Naive thymus-derived CD4-positive, alpha-beta T cell (primary cell): ENCODE measurements at regions of chr5 and their contacts with region 1.

Region 1: GRCh38 chr5:35822511-35822910 is 34.2 kb upstream of the IL7R start:
- DNase-seq: peak in 7 of 9 donors; percentile 49 to 83 (median 76)
- ATAC-seq: peak; percentile 82
- H3K4me3 ChIP-seq: peak overlapping the region; percentile 7
- H3K4me3 Mint-ChIP-seq: peak overlapping the region; percentile 38 to 75 (median 70)
- H3K27ac ChIP-seq: peak overlapping the region; percentile 62
- H3K27ac Mint-ChIP-seq: peak overlapping the region; percentile 84 to 98 (median 95)
- H3K4me1 ChIP-seq: peaks cover 91 to 92% of the 10 kb centered on the region in 2 donors
- H3K4me1 Mint-ChIP-seq: peaks cover 55 to 94% (median 88%) of the 10 kb centered on the region in 7 donors
- H3K27me3 ChIP-seq: no peaks in the 10 kb centered on the region
- H3K27me3 Mint-ChIP-seq: no peaks in the 10 kb centered on the region

Region 2: GRCh38 chr5:35785601-35786085 is 36.9 kb before region 1 on chr5:
- CTCF ChIA-PET with region 1: interaction called, 50 read pairs
- POLR2A ChIA-PET with region 1: interaction called, 238 read pairs
- intact Hi-C with region 1: no loop called
- DNase-seq: peak in 1 of 9 donors; percentile 57
- ATAC-seq: peak; percentile 36
- H3K4me3 ChIP-seq: no peak overlapping the region
- H3K4me3 Mint-ChIP-seq: peak overlapping the region; percentile 16 to 68 (median 60)
- H3K27ac ChIP-seq: no peak overlapping the region
- H3K27ac Mint-ChIP-seq: peak overlapping the region; percentile 20 to 89 (median 68)
- H3K4me1 ChIP-seq: peaks cover 38 to 53% of the 10 kb centered on the region in 2 donors
- H3K4me1 Mint-ChIP-seq: peaks cover 29 to 97% (median 88%) of the 10 kb centered on the region in 7 donors
- H3K27me3 ChIP-seq: no peaks in the 10 kb centered on the region
- H3K27me3 Mint-ChIP-seq: no peaks in the 10 kb centered on the region

Region 3: GRCh38 chr5:35803191-35803651 is 19.3 kb before region 1 on chr5:
- CTCF ChIA-PET with region 1: interaction called, 4 read pairs
- POLR2A ChIA-PET with region 1: interaction called, 126 read pairs
- intact Hi-C with region 1: no loop called
- DNase-seq: peak in 3 of 9 donors; percentile 33 to 34 (median 34)
- ATAC-seq: peak; percentile 61
- H3K4me3 ChIP-seq: peak overlapping the region; percentile 0
- H3K4me3 Mint-ChIP-seq: peak overlapping the region; percentile 42 to 72 (median 64)
- H3K27ac ChIP-seq: no peak overlapping the region
- H3K27ac Mint-ChIP-seq: peak overlapping the region; percentile 44 to 89 (median 82)
- H3K4me1 ChIP-seq: peaks cover 36 to 54% of the 10 kb centered on the region in 2 donors
- H3K4me1 Mint-ChIP-seq: peaks cover 31 to 90% (median 82%) of the 10 kb centered on the region in 7 donors
- H3K27me3 ChIP-seq: no peaks in the 10 kb centered on the region
- H3K27me3 Mint-ChIP-seq: no peaks in the 10 kb centered on the region

Region 4: GRCh38 chr5:35838370-35839042 is 16.0 kb after region 1 on chr5:
- CTCF ChIA-PET with region 1: interaction called, 4 read pairs
- POLR2A ChIA-PET with region 1: interaction called, 26 read pairs
- intact Hi-C with region 1: loop called (anchors 1 kb)
- DNase-seq: no peak
- ATAC-seq: no peak
- H3K4me3 ChIP-seq: no peak overlapping the region
- H3K4me3 Mint-ChIP-seq: peak overlapping the region; percentile 4 to 68 (median 31)
- H3K27ac ChIP-seq: no peak overlapping the region
- H3K27ac Mint-ChIP-seq: peak overlapping the region in 8 of 9 donors; percentile 15 to 97 (median 66)
- H3K4me1 ChIP-seq: peaks cover 36 to 39% of the 10 kb centered on the region in 2 donors
- H3K4me1 Mint-ChIP-seq: peaks cover 34 to 85% (median 78%) of the 10 kb centered on the region in 7 donors
- H3K27me3 ChIP-seq: no peaks in the 10 kb centered on the region
- H3K27me3 Mint-ChIP-seq: no peaks in the 10 kb centered on the region

Region 5: GRCh38 chr5:35857606-35858205 is 35.2 kb after region 1 on chr5:
- CTCF ChIA-PET with region 1: interaction called, 18 read pairs
- POLR2A ChIA-PET with region 1: interaction called, 1,069 read pairs
- intact Hi-C with region 1: loop called (anchors 1 kb)
- DNase-seq: peak in 1 of 9 donors; percentile 41
- ATAC-seq: no peak
- H3K4me3 ChIP-seq: peak overlapping the region; percentile 80
- H3K4me3 Mint-ChIP-seq: peak overlapping the region; percentile 82 to 100 (median 94)
- H3K27ac ChIP-seq: peak overlapping the region; percentile 98
- H3K27ac Mint-ChIP-seq: peak overlapping the region; percentile 96 to 100 (median 99)
- H3K4me1 ChIP-seq: peaks cover 40 to 50% of the 10 kb centered on the region in 2 donors
- H3K4me1 Mint-ChIP-seq: peaks cover 25 to 73% (median 63%) of the 10 kb centered on the region in 7 donors
- H3K27me3 ChIP-seq: no peaks in the 10 kb centered on the region
- H3K27me3 Mint-ChIP-seq: no peaks in the 10 kb centered on the region

Region 6: GRCh38 chr5:35876921-35877320 is 54.4 kb after region 1 on chr5:
- CTCF ChIA-PET with region 1: interaction called, 4 read pairs
- POLR2A ChIA-PET with region 1: interaction called, 67 read pairs
- intact Hi-C with region 1: no loop called
- DNase-seq: no peak
- ATAC-seq: no peak
- H3K4me3 ChIP-seq: no peak overlapping the region
- H3K4me3 Mint-ChIP-seq: peak overlapping the region in 8 of 10 donors; percentile 5 to 73 (median 47)
- H3K27ac ChIP-seq: peak overlapping the region; percentile 27
- H3K27ac Mint-ChIP-seq: peak overlapping the region; percentile 24 to 87 (median 72)
- H3K4me1 ChIP-seq: peaks cover 25 to 62% of the 10 kb centered on the region in 2 donors
- H3K4me1 Mint-ChIP-seq: peaks cover 51 to 99% (median 94%) of the 10 kb centered on the region in 7 donors
- H3K27me3 ChIP-seq: no peaks in the 10 kb centered on the region
- H3K27me3 Mint-ChIP-seq: no peaks in the 10 kb centered on the region

Region 7: GRCh38 chr5:35884115-35884788 is 61.7 kb after region 1 on chr5:
- CTCF ChIA-PET with region 1: no interaction called
- POLR2A ChIA-PET with region 1: interaction called, 18 read pairs
- intact Hi-C with region 1: no loop called
- DNase-seq: no peak
- ATAC-seq: peak; percentile 57
- H3K4me3 ChIP-seq: no peak overlapping the region
- H3K4me3 Mint-ChIP-seq: peak overlapping the region in 8 of 10 donors; percentile 2 to 62 (median 18)
- H3K27ac ChIP-seq: no peak overlapping the region
- H3K27ac Mint-ChIP-seq: peak overlapping the region in 8 of 9 donors; percentile 5 to 90 (median 68)
- H3K4me1 ChIP-seq: peaks cover 10 to 25% of the 10 kb centered on the region in 2 donors
- H3K4me1 Mint-ChIP-seq: peaks cover 37 to 56% (median 51%) of the 10 kb centered on the region in 7 donors
- H3K27me3 ChIP-seq: no peaks in the 10 kb centered on the region
- H3K27me3 Mint-ChIP-seq: no peaks in the 10 kb centered on the region

Region 8: DNA sequence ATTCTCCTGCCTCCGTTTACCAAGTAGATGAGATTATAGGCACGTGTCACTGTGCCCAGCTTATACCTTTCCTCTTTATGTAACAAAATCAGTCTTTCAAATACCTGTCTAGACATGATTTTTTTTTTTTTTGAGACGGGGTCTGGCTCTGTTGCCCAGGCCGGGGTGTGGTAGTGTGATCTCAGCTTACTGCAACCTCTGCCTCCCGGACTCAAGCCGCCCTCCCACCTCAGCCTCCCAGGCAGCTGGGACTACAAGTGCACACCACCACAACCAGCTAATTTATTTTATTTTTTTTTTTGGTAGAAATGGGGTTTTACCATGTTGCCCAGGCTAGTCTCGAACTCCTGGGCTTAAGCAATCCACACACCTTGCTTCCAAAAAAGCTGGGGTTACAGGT is 406.0 kb after region 1 on chr5:
- CTCF ChIA-PET with region 1: no interaction called
- POLR2A ChIA-PET with region 1: no interaction called
- intact Hi-C with region 1: no loop called
- DNase-seq: no peak
- ATAC-seq: no peak
- H3K4me3 ChIP-seq: no peak overlapping the region
- H3K4me3 Mint-ChIP-seq: no peak overlapping the region
- H3K27ac ChIP-seq: no peak overlapping the region
- H3K27ac Mint-ChIP-seq: no peak overlapping the region
- H3K4me1 ChIP-seq: no peaks in the 10 kb centered on the region
- H3K4me1 Mint-ChIP-seq: peaks cover 0 to 22% (median 9%) of the 10 kb centered on the region in 7 donors
- H3K27me3 ChIP-seq: no peaks in the 10 kb centered on the region
- H3K27me3 Mint-ChIP-seq: no peaks in the 10 kb centered on the region